ENCODE measurements at regions of chr16 and their contacts with region 1.

Region 1: GRCh38 chr16:20938426-20938825 is 37.9 kb downstream of the LYRM1 start:
- DNase-seq: no peak
- H3K4me3 ChIP-seq: no peak overlapping the region
- H3K4me3 Mint-ChIP-seq: no peak overlapping the region
- H3K27ac Mint-ChIP-seq: peak overlapping the region; percentile 80
- H3K4me1 ChIP-seq: peaks cover 47% of the 10 kb centered on the region
- H3K4me1 Mint-ChIP-seq: no peaks in the 10 kb centered on the region
- H3K27me3 ChIP-seq: no peaks in the 10 kb centered on the region
- H3K27me3 Mint-ChIP-seq: no peaks in the 10 kb centered on the region
- CTCF ChIP-seq: no peak

Region 2: GRCh38 chr16:20952159-20952920 is 13.9 kb after region 1 on chr16:
- CTCF ChIA-PET with region 1: no interaction called
- POLR2A ChIA-PET with region 1: interaction called, 7 read pairs
- intact Hi-C with region 1: loop called (anchors 1 kb)
- DNase-seq: peak in 1 of 2 experiments; percentile 41
- H3K4me3 ChIP-seq: no peak overlapping the region
- H3K4me3 Mint-ChIP-seq: no peak overlapping the region
- H3K27ac Mint-ChIP-seq: peak overlapping the region; percentile 31
- H3K4me1 ChIP-seq: peaks cover 5% of the 10 kb centered on the region
- H3K4me1 Mint-ChIP-seq: peaks cover 6% of the 10 kb centered on the region
- H3K27me3 ChIP-seq: no peaks in the 10 kb centered on the region
- H3K27me3 Mint-ChIP-seq: no peaks in the 10 kb centered on the region
- CTCF ChIP-seq: no peak

Measured in Caco-2 (cell line).